ENCODE measurements at regions of chr5 and their contacts with region 1.

Region 1: DNA sequence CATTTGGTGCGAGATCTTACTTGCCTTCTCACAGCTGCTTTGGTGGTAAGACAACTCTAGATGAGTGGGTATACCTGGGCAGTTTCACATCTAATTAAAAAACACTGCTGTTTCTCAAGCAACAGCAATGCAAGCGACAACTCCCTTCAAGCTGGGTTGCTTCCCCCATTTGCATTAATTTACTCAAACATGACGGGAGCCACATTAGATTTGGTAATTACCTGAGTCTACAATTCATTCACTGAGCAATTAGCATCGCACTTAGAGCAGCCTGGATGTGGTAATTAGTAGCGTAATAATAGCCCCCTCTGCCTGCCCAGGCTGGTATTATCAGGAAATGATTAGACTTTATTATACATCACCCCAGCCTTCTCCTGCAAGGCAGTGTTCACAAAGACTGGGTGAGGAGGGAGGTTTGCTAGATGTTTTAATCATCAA is 73.4 kb downstream of the FBXO38 start:
- DNase-seq: peak in 4 of 5 donors; percentile 8 to 21 (median 13)
- H3K4me3 ChIP-seq: no peak overlapping the region
- H3K4me3 Mint-ChIP-seq: no peak overlapping the region
- H3K27ac ChIP-seq: no peak overlapping the region
- H3K27ac Mint-ChIP-seq: no peak overlapping the region
- H3K4me1 ChIP-seq: no peaks in the 10 kb centered on the region
- H3K4me1 Mint-ChIP-seq: peaks cover 0 to 1% (median under 1%) of the 10 kb centered on the region in 4 donors
- H3K27me3 ChIP-seq: peaks cover 5% of the 10 kb centered on the region
- H3K27me3 Mint-ChIP-seq: peaks cover 14 to 17% of the 10 kb centered on the region in 2 donors

Region 2: GRCh38 chr5:148179234-148179824 is 277.9 kb before region 1 on chr5:
- CTCF ChIA-PET with region 1: no interaction called
- POLR2A ChIA-PET with region 1: no interaction called
- intact Hi-C with region 1: loop called (anchors 2 kb)
- DNase-seq: peak; percentile 28 to 45 (median 38)
- H3K4me3 ChIP-seq: no peak overlapping the region
- H3K4me3 Mint-ChIP-seq: no peak overlapping the region
- H3K27ac ChIP-seq: no peak overlapping the region
- H3K27ac Mint-ChIP-seq: no peak overlapping the region
- H3K4me1 ChIP-seq: no peaks in the 10 kb centered on the region
- H3K4me1 Mint-ChIP-seq: no peaks in the 10 kb centered on the region
- H3K27me3 ChIP-seq: no peaks in the 10 kb centered on the region
- H3K27me3 Mint-ChIP-seq: peaks cover 2 to 4% of the 10 kb centered on the region in 2 donors

Region 3: GRCh38 chr5:148595697-148596096 is 138.5 kb after region 1 on chr5:
- CTCF ChIA-PET with region 1: no interaction called
- POLR2A ChIA-PET with region 1: no interaction called
- intact Hi-C with region 1: no loop called
- DNase-seq: no peak
- H3K4me3 ChIP-seq: no peak overlapping the region
- H3K4me3 Mint-ChIP-seq: no peak overlapping the region
- H3K27ac ChIP-seq: no peak overlapping the region
- H3K27ac Mint-ChIP-seq: no peak overlapping the region
- H3K4me1 ChIP-seq: no peaks in the 10 kb centered on the region
- H3K4me1 Mint-ChIP-seq: no peaks in the 10 kb centered on the region
- H3K27me3 ChIP-seq: no peaks in the 10 kb centered on the region
- H3K27me3 Mint-ChIP-seq: peaks cover 10 to 12% of the 10 kb centered on the region in 2 donors

Region 4: DNA sequence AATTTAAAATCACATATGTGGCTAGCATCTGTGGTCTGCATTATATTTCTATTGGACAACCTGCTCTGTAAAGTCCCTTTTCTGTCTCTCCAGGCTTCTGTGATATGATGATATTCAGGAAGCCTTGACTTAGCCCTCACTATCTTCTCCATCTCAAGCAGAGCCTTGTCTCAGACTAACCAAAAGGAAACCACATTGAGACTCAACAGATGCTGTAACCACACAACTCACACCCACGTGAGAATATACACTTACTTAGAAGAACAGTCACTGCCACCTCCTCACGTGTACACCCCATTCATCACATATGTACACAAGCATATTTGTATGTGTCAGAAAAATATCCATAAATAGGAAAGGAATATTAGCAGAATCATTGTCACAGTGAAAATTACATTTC is 163.5 kb after region 1 on chr5:
- CTCF ChIA-PET with region 1: no interaction called
- POLR2A ChIA-PET with region 1: no interaction called
- intact Hi-C with region 1: no loop called
- DNase-seq: peak; percentile 39 to 68 (median 50)
- H3K4me3 ChIP-seq: no peak overlapping the region
- H3K4me3 Mint-ChIP-seq: peak overlapping the region in 5 of 8 donors; percentile 2 to 53 (median 32)
- H3K27ac ChIP-seq: no peak overlapping the region
- H3K27ac Mint-ChIP-seq: peak overlapping the region in 3 of 7 donors; percentile 13 to 66 (median 48)
- H3K4me1 ChIP-seq: peaks cover 19% of the 10 kb centered on the region
- H3K4me1 Mint-ChIP-seq: peaks cover 20 to 35% (median 27%) of the 10 kb centered on the region in 4 donors
- H3K27me3 ChIP-seq: no peaks in the 10 kb centered on the region
- H3K27me3 Mint-ChIP-seq: peaks cover 2 to 4% of the 10 kb centered on the region in 2 donors